ENCODE measurements at regions of chr5 and their contacts with region 1.

Region 1: DNA sequence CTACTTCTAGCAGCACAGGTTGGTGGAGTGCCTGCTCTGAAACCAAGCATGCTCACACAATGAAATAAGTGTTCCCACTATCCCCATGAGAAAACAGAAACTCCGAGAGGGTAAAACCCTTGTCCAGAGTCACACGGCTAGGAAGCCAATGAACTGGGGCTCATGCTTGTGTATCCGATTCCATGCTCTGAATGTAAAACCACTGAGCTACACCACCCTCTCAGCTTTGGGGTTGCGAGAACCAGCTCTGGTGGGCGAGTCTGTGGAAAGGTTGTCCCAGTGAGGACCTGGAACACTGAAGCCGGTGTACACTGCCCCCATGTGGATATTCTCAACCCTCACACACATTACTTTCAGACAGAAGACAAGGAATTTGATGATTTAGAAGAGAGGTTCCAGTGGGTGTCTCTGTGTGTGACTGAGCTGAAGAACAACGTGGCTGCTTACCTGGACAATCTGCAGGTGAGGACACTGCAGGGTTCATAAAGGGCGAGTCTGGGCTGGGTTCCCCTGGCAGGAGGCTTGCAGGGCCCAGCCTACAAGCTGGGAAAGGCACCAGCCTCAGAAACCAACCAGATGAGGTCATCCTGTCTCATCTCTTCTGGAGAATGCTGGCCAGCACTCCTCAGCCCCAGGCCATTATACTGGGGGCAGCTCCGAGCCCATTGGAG is 37.4 kb downstream of the ARHGEF37 start:
- DNase-seq: peak; percentile 60
- ATAC-seq: peak; percentile 63
- H3K4me3 Mint-ChIP-seq: no peak overlapping the region
- H3K27ac Mint-ChIP-seq: peak overlapping the region; percentile 13
- H3K4me1 Mint-ChIP-seq: peaks cover 7% of the 10 kb centered on the region
- H3K27me3 Mint-ChIP-seq: no peaks in the 10 kb centered on the region

Region 2: GRCh38 chr5:149280124-149280523 is 338.6 kb before region 1 on chr5:
- CTCF ChIA-PET with region 1: no interaction called
- POLR2A ChIA-PET with region 1: no interaction called
- intact Hi-C with region 1: no loop called
- DNase-seq: no peak
- ATAC-seq: no peak
- H3K4me3 Mint-ChIP-seq: no peak overlapping the region
- H3K27ac Mint-ChIP-seq: no peak overlapping the region
- H3K4me1 Mint-ChIP-seq: no peaks in the 10 kb centered on the region
- H3K27me3 Mint-ChIP-seq: peaks cover 8% of the 10 kb centered on the region

Region 3: DNA sequence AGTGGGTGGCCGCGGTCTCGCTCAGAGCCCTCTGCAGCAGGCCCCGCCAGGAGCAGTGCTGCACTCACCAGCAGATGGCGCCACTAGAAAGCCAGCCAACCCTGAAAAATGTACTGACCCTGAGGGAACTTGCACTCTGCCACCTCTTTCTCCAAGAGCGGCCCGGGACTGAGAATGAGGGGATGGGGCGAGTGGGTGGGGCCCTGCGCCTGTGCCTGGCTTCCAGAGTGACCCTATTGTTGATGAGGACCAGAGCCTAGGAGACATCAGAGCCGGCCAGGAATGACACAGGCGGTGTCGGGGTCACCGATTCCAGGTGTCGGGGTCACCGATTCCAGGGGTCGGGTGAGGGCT is 236.8 kb before region 1 on chr5:
- CTCF ChIA-PET with region 1: interaction called, 4 read pairs
- POLR2A ChIA-PET with region 1: no interaction called
- intact Hi-C with region 1: loop called in 1 of 2 experiments (anchors 1 kb)
- DNase-seq: peak; percentile 87
- ATAC-seq: peak; percentile 97
- H3K4me3 Mint-ChIP-seq: no peak overlapping the region
- H3K27ac Mint-ChIP-seq: no peak overlapping the region
- H3K4me1 Mint-ChIP-seq: no peaks in the 10 kb centered on the region
- H3K27me3 Mint-ChIP-seq: no peaks in the 10 kb centered on the region

Measured in activated CD4-positive, alpha-beta T cell treated with anti-CD3 and anti-CD28 coated beads for 36 hours (primary cell).